ENCODE measurements at regions of chr15 and their contacts with region 1.

Region 1: DNA sequence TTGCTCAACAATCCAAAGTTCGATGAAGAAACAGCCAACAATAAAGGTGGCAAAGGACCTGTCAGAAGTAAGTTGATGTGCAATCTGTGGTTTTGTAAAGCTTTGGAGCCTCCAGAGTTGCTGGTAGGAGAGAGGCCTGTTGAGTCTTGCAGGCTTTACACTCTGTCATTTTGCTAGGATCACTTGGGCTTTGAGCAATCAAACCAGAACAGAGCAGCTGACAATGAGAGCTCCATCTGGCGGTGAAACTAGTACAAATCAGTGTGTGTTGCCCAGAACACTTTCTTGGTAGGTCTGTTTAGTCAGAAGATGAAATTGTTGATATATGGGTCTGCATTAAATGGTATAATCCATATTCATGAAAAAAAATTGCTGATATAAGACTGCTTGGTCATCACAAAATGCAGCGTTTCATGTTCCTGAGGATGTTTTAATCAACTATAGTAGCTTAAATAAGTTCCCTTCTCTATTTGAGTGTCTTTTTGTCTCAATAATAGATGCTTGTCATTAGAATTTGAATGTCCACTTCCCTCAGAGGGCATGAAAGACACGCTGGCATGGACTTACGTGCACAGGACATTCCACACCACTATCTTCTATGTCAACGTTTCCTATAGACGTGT is 25.7 kb downstream of the TMOD2 start:
- DNase-seq: peak; percentile 74
- ATAC-seq: peak; percentile 95
- H3K4me3 ChIP-seq: no peak overlapping the region
- H3K27ac ChIP-seq: no peak overlapping the region
- H3K4me1 ChIP-seq: no peaks in the 10 kb centered on the region
- H3K27me3 ChIP-seq: no peaks in the 10 kb centered on the region
- CTCF ChIP-seq: peak; percentile 77

Region 2: DNA sequence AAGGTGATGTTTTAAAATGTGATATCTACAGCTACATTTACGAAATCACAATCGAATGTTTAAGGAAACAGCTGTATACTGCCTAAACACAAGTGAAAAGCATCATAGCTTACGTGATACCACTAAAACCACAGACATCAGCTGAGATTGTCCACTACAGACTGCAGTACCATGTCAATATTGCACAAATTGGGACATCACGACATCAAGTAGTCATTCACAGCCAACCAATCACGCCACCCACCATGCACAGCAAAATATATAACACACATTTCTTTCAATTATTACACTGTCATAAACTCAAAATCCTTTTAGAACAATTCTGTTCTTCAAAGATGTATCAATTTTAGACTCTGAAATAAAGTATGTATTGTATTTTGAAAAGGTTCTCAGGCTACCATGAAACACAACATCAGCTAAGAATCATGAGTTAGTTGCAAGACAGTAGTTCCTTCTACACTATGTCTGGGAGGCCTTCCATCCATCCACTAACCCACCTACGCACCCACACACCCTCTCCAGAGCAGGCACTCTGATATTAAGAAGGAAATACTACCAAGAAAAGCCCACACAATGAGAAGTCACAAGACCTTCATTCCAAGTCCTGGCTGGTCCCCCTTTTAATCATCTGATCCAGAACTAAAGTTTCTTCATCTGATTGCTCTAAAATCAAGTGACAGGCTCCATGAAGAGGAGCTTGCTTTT is 157.6 kb before region 1 on chr15:
- CTCF ChIA-PET with region 1: no interaction called
- POLR2A ChIA-PET with region 1: no interaction called
- in situ Hi-C with region 1: no loop called
- intact Hi-C with region 1: no loop called
- DNase-seq: no peak
- ATAC-seq: no peak
- H3K4me3 ChIP-seq: no peak overlapping the region
- H3K27ac ChIP-seq: no peak overlapping the region
- H3K4me1 ChIP-seq: peaks cover 24% of the 10 kb centered on the region
- H3K27me3 ChIP-seq: no peaks in the 10 kb centered on the region
- CTCF ChIP-seq: no peak

Region 3: DNA sequence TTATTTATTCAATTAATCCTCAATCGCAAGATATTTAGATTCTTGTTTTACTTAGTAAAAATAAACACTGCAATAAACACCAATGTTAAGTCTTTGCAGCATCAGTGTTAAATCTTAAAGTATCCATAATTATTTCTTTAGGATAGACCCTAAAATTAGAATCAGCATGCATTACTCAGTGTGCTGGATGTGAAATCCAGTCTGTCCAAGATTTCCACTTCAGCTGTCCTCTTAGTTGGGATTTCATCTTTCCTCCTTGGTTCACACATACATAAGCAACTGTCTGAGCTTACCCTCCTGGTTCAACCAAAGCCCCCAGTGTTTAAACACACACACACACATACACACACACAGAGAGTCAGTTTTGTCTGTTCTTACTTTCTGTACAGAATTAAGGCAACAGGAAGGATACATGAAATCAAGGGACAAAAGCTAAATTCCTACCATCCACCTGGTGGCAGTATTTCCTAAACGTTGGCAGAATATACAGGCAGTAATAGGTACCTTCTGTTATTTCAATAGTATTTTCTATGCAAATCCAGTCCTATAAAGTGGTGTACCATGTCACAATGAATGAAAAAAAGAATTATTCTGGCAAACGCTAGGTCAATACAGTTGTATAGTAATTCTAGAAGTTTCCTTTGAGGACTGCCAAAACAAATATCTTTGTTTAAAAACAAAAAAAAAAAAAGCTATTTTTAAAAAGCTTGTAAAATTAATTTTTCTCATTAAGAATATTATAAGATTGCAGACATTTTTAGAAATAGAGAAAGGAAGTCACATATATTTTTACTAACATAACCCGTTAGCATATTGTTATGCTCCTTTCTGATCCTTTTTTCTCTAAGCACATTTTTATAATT is 127.2 kb before region 1 on chr15:
- CTCF ChIA-PET with region 1: interaction called, 74 read pairs
- POLR2A ChIA-PET with region 1: no interaction called
- in situ Hi-C with region 1: no loop called
- intact Hi-C with region 1: loop called (anchors 1 kb)
- DNase-seq: peak; percentile 61
- ATAC-seq: peak; percentile 97
- H3K4me3 ChIP-seq: no peak overlapping the region
- H3K27ac ChIP-seq: no peak overlapping the region
- H3K4me1 ChIP-seq: no peaks in the 10 kb centered on the region
- H3K27me3 ChIP-seq: no peaks in the 10 kb centered on the region; the same call in 1 of the 2 replicates
- CTCF ChIP-seq: peak; percentile 73

Region 4: GRCh38 chr15:51737280-51738017 is 39.6 kb before region 1 on chr15 and contains the start of gene LYSMD2:
- CTCF ChIA-PET with region 1: interaction called, 4 read pairs
- POLR2A ChIA-PET with region 1: no interaction called
- in situ Hi-C with region 1: no loop called
- intact Hi-C with region 1: loop called (anchors 1 kb)
- DNase-seq: no peak
- ATAC-seq: peak; percentile 92
- H3K4me3 ChIP-seq: peak within 1 kb of the TSS; percentile 62 to 79
- H3K27ac ChIP-seq: peak within 1 kb of the TSS; percentile 71
- H3K4me1 ChIP-seq: peaks cover 12% of the 10 kb centered on the region
- H3K27me3 ChIP-seq: no peaks in the 10 kb centered on the region
- CTCF ChIP-seq: no peak
- total RNA-seq, gene LYSMD2: 17.2 TPM

Measured in Panc1 (cell line).